ENCODE measurements at regions of chrX and their contacts with region 1.

Region 1: DNA sequence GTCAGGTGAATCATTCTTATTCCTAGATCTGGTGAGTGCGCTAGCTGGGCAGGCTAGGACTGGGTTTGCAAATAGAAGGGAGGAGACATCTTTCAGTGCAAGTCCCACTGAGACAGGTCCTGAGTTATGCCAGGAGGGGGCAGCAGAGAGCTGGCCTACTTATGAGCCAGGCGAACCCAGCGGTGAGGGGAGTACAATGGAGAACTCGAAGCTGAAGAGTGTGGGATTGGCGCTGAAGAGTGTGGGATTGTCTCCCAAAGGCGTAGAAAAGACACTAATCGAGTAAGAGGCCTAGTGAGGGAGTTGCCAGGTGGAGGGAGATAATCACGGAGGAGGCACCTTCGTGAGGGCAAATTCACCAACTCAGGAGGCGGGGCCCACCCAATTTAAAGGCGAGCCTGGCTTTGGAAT is 91.7 kb upstream of the CXorf66 start:
- DNase-seq: peak; percentile 38 to 66
- ATAC-seq: peak; percentile 55 to 95 (median 72)
- H3K4me3 ChIP-seq: no peak overlapping the region
- H3K4me3 Mint-ChIP-seq: no peak overlapping the region
- H3K27ac ChIP-seq: no peak overlapping the region
- H3K27ac Mint-ChIP-seq: no peak overlapping the region
- H3K4me1 ChIP-seq: peaks cover 3% of the 10 kb centered on the region
- H3K4me1 Mint-ChIP-seq: peaks cover 6 to 7% of the 10 kb centered on the region in 2 donors
- H3K27me3 ChIP-seq: no peaks in the 10 kb centered on the region
- H3K27me3 Mint-ChIP-seq: peaks cover 5 to 15% of the 10 kb centered on the region in 2 donors
- CTCF ChIP-seq: peak; percentile 65

Region 2: GRCh38 chrX:139967300-139967699 is 89.7 kb before region 1 on chrX:
- intact Hi-C with region 1: no loop called
- DNase-seq: peak in 1 of 2 donors; percentile 4
- ATAC-seq: no peak
- H3K4me3 ChIP-seq: no peak overlapping the region
- H3K4me3 Mint-ChIP-seq: no peak overlapping the region
- H3K27ac ChIP-seq: no peak overlapping the region
- H3K27ac Mint-ChIP-seq: no peak overlapping the region
- H3K4me1 ChIP-seq: no peaks in the 10 kb centered on the region
- H3K4me1 Mint-ChIP-seq: no peaks in the 10 kb centered on the region
- H3K27me3 ChIP-seq: no peaks in the 10 kb centered on the region
- H3K27me3 Mint-ChIP-seq: peaks cover 11 to 35% of the 10 kb centered on the region in 2 donors
- CTCF ChIP-seq: no peak

Region 3: GRCh38 chrX:140141444-140142029 is 84.5 kb after region 1 on chrX:
- intact Hi-C with region 1: loop called (anchors 5 kb)
- DNase-seq: peak in 1 of 2 donors; percentile 35
- ATAC-seq: peak in 1 of 3 donors; percentile 65
- H3K4me3 ChIP-seq: no peak overlapping the region
- H3K4me3 Mint-ChIP-seq: no peak overlapping the region
- H3K27ac ChIP-seq: no peak overlapping the region
- H3K27ac Mint-ChIP-seq: no peak overlapping the region
- H3K4me1 ChIP-seq: no peaks in the 10 kb centered on the region
- H3K4me1 Mint-ChIP-seq: no peaks in the 10 kb centered on the region
- H3K27me3 ChIP-seq: no peaks in the 10 kb centered on the region
- H3K27me3 Mint-ChIP-seq: no peaks in the 10 kb centered on the region
- CTCF ChIP-seq: peak; percentile 31

Region 4: GRCh38 chrX:140733769-140734342 is 676.9 kb after region 1 on chrX:
- intact Hi-C with region 1: loop called (anchors 5 kb)
- DNase-seq: peak in 1 of 2 donors; percentile 46
- ATAC-seq: peak in 1 of 3 donors; percentile 74
- H3K4me3 ChIP-seq: no peak overlapping the region
- H3K4me3 Mint-ChIP-seq: no peak overlapping the region
- H3K27ac ChIP-seq: no peak overlapping the region
- H3K27ac Mint-ChIP-seq: no peak overlapping the region
- H3K4me1 ChIP-seq: no peaks in the 10 kb centered on the region
- H3K4me1 Mint-ChIP-seq: no peaks in the 10 kb centered on the region
- H3K27me3 ChIP-seq: no peaks in the 10 kb centered on the region
- H3K27me3 Mint-ChIP-seq: no peaks in the 10 kb centered on the region
- CTCF ChIP-seq: peak; percentile 46